Sigmoid colon (tissue), 7 donors: ENCODE measurements at regions of chr15 and their contacts with region 1.

Region 1: DNA sequence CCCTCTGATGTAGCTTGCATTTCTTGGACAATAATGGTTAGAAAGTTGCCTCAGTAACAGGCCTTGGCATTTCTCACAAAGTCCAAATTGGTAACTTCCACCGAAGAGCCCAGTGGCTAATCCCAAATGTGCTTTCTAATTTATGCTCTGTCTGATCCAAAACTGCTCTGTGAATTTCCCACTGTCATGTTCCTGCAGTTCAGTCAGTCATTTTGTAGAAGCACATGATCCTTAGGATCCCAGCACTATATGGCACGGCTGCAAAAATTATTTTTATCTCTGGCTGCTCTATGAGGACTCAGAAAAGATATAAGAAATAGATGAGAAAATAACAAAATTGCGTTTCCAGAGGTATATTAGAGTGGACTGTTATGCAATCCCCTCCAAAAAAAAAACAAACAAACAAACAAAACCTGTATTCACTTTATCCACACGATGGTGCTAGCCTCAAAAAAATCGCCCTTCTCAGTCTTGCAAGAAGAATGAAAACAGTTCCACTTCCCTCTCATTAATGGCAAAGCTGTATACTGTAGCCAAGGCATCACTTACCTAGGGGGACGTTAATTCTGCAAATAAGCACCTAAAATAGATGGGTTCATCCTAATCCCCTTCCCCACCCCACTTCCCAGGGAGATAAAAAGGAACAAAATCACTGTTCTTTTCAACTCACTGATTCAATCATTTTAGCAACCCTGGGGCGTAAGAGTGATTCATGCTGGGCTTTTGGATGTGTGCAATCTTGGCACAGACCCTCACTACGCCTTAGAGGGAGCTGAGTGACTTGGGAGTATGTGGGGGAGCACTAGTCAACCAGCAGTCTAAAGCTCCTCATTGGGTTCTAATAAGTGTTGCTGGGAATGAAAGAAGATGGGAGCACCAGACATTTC is 61.3 kb downstream of the TMCO5A start:
- DNase-seq: no peak
- H3K4me3 ChIP-seq: no peak overlapping the region
- H3K27ac ChIP-seq: no peak overlapping the region
- H3K4me1 ChIP-seq: no peaks in the 10 kb centered on the region
- H3K27me3 ChIP-seq: no peaks in the 10 kb centered on the region
- CTCF ChIP-seq: peak in 3 of 4 experiments; percentile 21 to 40 (median 29)
- EP300 ChIP-seq: no peak
- POLR2A ChIP-seq: no peak

Region 2: GRCh38 chr15:37837276-37837675 is 158.4 kb before region 1 on chr15:
- intact Hi-C with region 1: no loop called
- DNase-seq: no peak
- H3K4me3 ChIP-seq: no peak overlapping the region
- H3K27ac ChIP-seq: no peak overlapping the region
- H3K4me1 ChIP-seq: no peaks in the 10 kb centered on the region
- H3K27me3 ChIP-seq: no peaks in the 10 kb centered on the region
- CTCF ChIP-seq: no peak
- EP300 ChIP-seq: no peak
- POLR2A ChIP-seq: no peak

Region 3: DNA sequence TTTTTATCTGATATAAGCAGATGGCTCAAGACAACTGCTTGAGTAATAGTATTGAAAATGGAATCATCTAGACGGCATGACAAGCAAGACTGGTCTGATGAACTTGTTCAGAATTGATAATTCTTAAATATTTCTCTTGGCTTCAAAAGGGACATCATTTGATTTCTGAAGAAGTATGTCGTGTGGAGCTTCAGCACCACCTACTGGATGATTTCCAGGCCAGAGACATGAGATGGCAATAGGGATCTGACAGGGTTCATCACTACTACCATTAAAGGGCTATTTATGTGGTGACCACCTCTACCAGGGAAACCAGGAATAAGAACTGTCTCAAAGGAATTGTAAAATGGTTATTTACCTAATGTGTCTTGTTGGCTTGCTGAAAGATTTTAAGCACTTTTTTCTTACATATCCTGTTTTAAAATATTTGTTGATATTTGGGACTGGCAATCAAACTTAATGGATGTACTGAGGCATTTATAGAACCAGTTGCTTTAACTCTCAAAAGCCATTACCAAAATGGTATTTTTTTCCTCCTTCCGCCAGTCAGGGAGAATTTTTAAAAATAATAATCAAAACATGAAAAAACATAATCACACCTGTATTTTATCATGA is 358.7 kb after region 1 on chr15:
- intact Hi-C with region 1: loop called (anchors 2 kb)
- DNase-seq: no peak
- H3K4me3 ChIP-seq: no peak overlapping the region
- H3K27ac ChIP-seq: no peak overlapping the region
- H3K4me1 ChIP-seq: no peaks in the 10 kb centered on the region
- H3K27me3 ChIP-seq: no peaks in the 10 kb centered on the region
- CTCF ChIP-seq: peak; percentile 18 to 72 (median 50)
- EP300 ChIP-seq: no peak
- POLR2A ChIP-seq: no peak

Region 4: DNA sequence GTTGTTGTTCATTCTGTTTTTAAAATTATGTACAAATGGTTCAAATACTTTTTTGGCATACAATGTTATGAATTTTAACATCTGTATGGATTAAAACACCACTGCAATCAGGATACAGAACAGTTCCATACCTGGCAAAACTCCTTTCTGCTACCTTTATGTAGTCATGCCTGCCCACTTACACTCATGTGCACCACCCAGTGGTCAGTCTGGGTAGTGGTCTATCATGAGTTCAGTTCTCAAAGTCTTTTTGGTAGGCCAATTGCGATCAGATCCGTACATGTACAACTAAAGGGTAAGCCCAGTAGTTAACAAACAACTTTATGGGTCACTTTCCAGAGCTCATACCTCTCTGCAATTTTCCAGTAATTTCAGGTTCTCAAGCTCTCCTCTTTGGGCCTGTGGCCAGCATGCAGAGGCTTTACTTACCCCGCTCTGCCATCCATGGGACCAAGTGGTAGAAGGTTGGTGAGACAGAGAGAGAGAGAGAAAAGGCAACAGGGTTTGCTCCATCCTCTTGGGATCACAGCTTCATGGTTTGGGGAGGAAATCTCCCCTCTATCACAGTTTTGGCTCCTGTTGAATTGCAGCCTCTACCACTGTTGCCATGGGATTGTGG is 394.3 kb after region 1 on chr15:
- intact Hi-C with region 1: loop called (anchors 5 kb)
- DNase-seq: no peak
- H3K4me3 ChIP-seq: no peak overlapping the region
- H3K27ac ChIP-seq: no peak overlapping the region
- H3K4me1 ChIP-seq: no peaks in the 10 kb centered on the region
- H3K27me3 ChIP-seq: no peaks in the 10 kb centered on the region
- CTCF ChIP-seq: peak; percentile 45 to 79 (median 50)
- EP300 ChIP-seq: no peak
- POLR2A ChIP-seq: no peak